ENCODE measurements at regions of chr5 and their contacts with region 1.

Region 1: DNA sequence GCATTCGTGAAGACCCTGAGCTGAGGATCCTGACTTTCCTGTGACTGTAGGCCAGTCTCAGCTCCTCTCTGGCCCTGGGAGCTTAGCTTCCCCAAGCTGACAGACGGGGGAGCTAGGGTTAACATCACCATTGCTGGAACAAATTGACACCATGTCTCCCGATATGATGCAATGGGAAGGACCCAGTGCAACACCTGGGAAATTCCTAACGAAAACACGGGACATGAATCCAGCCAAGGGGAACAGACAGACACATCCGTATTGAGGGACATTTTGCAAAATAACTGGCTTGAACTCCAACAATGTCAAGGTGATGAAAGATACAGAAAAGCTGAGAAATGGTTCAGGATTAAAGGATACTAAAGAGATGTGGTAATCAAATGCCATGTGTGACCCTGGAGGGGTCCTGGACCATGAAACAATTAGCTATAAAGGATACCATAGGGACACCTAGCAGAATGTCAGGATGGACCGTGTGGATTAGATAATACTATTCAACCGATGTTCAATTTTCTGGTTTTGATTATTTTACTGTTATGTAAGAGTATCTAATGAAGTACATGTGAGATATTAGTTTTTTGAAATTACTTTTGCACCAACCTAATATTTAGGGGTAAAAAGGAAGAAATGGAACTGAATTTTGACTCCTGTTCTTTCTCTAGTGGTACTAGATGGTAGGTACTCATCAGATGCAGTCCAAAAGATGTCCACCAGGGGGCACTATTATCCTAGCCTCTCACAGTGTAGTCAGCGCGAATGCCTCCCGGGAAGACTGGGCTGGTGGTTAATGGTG is 52.7 kb downstream of the NDST1 start:
- DNase-seq: peak; percentile 93
- ATAC-seq: peak; percentile 91

Region 2: GRCh38 chr5:150640311-150641005 is 79.9 kb after region 1 on chr5 and contains the start of gene SYNPO:
- intact Hi-C with region 1: loop called (anchors 5 kb)
- DNase-seq: peak; percentile 83
- ATAC-seq: peak; percentile 72
- total RNA-seq, gene SYNPO: 179 TPM

Region 3: GRCh38 chr5:150656191-150657132 is 95.9 kb after region 1 on chr5:
- intact Hi-C with region 1: loop called (anchors 2 kb)
- DNase-seq: peak; percentile 87
- ATAC-seq: peak; percentile 44